ENCODE measurements at regions of chr7 and their contacts with region 1.

Region 1: DNA sequence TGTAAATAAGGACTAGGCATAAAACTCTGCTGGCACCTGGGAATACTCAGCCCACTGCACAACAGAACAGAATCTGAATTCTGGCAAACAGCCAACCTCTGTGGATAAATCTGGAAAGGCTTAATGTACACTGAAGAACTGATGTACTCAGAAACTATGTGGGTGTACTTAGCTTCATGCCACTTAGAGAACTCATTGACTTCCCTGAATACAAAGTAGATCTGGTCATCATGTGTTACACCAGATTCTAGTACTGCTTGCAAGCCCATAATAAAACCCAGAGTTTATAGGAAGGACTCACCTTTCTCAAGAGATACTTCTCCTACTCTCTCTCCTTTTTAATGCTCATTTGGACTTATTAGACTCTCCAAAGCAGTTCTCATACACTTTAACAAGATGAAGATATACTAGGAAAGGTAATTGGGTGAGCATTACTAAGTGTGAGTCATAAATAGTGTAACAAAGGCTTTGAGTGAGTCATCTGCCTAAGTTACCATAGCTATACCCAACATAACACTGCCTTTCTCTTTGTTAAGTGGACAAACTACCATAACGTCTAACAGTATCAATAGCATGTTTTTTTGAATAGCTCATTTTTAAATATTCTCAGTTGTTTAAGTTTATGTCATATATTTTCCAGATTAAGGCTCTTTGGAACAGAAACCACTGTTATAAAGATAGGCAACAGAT is 309.1 kb downstream of the MDFIC start:
- DNase-seq: peak; percentile 50 to 93
- H3K4me3 ChIP-seq: no peak overlapping the region
- H3K27ac ChIP-seq: peak overlapping the region; percentile 80
- H3K4me1 ChIP-seq: peaks cover 23% of the 10 kb centered on the region
- H3K27me3 ChIP-seq: no peaks in the 10 kb centered on the region
- CTCF ChIP-seq: no peak

Region 2: DNA sequence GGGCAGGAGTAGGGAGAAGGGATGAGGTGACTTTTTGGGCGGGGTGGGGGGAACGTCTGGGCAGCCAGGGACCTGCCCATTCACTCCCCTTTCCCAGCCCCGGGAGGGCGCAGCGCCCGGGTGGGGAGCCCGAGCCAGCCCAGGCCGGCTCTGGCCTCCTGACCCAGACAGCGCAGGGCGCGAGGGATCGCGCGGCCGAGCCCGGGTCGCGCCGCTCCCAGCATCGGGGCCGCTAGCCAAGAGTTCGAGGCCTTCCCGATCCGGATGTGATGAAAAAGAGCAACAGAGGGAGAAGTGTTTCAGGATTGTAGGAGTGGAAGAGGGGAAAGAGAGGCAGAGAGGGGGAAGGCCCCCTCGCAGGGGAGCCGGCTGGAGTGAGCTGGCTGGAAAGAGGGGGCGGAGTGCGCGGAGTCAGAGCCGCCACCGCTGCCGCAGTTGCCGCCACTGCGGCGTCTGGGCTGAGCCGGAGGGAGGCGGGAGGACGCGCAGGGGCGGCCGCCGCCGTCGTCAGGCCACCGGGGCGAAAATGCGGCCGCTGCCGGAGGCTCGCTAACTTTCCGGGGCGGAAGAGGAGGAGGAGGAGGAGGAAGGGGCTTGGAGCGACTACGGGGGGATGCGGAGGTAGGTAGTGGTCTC is 308.9 kb before region 1 on chr7 and contains the start of gene MDFIC:
- CTCF ChIA-PET with region 1: no interaction called
- POLR2A ChIA-PET with region 1: no interaction called
- intact Hi-C with region 1: loop called (anchors 10 kb)
- DNase-seq: peak in 1 of 2 experiments; percentile 52
- H3K4me3 ChIP-seq: peak within 1 kb of the TSS; percentile 61
- H3K27ac ChIP-seq: peak within 1 kb of the TSS; percentile 55
- H3K4me1 ChIP-seq: peaks cover 28% of the 10 kb centered on the region
- H3K27me3 ChIP-seq: no peaks in the 10 kb centered on the region
- CTCF ChIP-seq: no peak
- total RNA-seq, gene MDFIC: 38.9 and 39.8 TPM in 2 replicates

Region 3: GRCh38 chr7:115007751-115008150 is 223.3 kb before region 1 on chr7:
- CTCF ChIA-PET with region 1: no interaction called
- POLR2A ChIA-PET with region 1: interaction called, 19 read pairs
- intact Hi-C with region 1: no loop called
- DNase-seq: no peak
- H3K4me3 ChIP-seq: no peak overlapping the region
- H3K27ac ChIP-seq: no peak overlapping the region
- H3K4me1 ChIP-seq: peaks cover 4% of the 10 kb centered on the region; the same call in 1 of the 2 replicates
- H3K27me3 ChIP-seq: no peaks in the 10 kb centered on the region
- CTCF ChIP-seq: no peak

Region 4: DNA sequence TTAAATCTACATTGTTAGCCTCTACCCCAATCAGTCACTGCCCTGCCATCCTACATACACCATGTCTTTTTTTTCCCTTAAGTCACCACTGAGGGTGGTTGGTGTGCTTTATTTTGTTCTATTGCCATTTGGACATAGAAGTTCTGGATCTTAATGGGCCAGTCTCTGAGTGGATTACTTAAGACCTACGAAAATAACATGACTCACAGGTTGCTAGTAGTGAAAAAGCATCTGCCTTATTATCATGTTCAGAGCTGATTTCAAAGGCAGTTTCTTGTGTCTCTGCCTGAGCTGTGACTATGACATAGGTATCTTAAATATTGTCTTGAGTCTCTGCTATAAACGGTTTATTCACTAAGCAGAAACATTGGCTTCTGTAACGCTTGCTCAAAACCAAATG is 101.7 kb after region 1 on chr7:
- CTCF ChIA-PET with region 1: no interaction called
- POLR2A ChIA-PET with region 1: no interaction called
- intact Hi-C with region 1: no loop called
- DNase-seq: no peak
- H3K4me3 ChIP-seq: no peak overlapping the region
- H3K27ac ChIP-seq: no peak overlapping the region
- H3K4me1 ChIP-seq: no peaks in the 10 kb centered on the region
- H3K27me3 ChIP-seq: no peaks in the 10 kb centered on the region
- CTCF ChIP-seq: no peak

Measured in PC-9 (cell line).